A549 (cell line): ENCODE measurements at regions of chr1 and their contacts with region 1.

Region 1: DNA sequence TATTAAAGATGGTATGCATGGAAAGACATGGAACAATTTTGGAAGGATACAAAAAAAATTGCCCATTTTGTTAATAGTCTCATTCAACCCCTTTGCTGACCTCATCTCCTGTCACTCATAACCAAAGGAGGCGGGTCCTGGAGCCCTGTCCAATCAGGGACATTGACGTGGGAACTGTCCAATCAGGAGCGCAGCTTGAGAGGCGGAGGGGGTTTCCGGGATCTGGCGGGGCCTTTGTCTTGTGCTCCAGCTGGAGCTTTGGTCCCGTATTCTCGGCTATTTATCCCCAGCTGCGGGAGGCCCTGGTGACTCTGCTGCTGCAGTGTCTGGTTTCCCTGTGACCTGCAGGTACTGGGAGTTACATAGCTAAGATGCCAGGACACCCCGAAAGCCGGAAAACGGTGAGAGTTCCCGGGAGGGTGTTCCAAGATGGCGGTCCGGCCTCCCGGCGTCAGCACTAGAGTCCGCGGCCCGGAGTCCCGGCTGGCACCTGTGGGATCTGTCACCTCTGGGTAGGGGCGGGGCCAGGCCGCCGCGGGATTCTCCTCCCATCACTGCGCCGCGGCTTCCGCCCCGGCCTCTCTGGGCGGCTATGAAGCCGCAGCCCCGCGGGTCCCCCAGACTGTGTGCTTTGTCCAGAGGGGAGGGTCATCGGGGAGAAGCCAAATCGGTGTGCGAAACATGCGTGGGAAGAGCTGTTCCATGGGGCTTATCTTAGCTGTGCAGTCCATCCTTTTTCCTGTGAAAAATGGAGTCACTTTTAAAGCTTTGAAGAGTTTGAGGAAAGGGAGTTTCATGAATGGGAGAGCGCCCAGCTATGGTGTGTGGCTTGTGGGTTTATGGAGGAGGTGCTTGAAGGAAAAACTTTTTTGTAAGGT is at the start of gene ZNF678:
- DNase-seq: peak; percentile 97 to 99
- ATAC-seq: peak; percentile 98
- H3K4me3 ChIP-seq: peak within 1 kb of the TSS; percentile 61
- H3K27ac ChIP-seq: peak within 1 kb of the TSS; percentile 93
- H3K4me1 ChIP-seq: no peaks in the 10 kb centered on the region
- CTCF ChIP-seq: no peak
- EP300 ChIP-seq: no peak
- POLR2A ChIP-seq: peak; percentile 78
- RAD21 ChIP-seq: no peak
- polyA plus RNA-seq, gene ZNF678: 6.5 and 6.9 TPM in 2 replicates

Region 2: DNA sequence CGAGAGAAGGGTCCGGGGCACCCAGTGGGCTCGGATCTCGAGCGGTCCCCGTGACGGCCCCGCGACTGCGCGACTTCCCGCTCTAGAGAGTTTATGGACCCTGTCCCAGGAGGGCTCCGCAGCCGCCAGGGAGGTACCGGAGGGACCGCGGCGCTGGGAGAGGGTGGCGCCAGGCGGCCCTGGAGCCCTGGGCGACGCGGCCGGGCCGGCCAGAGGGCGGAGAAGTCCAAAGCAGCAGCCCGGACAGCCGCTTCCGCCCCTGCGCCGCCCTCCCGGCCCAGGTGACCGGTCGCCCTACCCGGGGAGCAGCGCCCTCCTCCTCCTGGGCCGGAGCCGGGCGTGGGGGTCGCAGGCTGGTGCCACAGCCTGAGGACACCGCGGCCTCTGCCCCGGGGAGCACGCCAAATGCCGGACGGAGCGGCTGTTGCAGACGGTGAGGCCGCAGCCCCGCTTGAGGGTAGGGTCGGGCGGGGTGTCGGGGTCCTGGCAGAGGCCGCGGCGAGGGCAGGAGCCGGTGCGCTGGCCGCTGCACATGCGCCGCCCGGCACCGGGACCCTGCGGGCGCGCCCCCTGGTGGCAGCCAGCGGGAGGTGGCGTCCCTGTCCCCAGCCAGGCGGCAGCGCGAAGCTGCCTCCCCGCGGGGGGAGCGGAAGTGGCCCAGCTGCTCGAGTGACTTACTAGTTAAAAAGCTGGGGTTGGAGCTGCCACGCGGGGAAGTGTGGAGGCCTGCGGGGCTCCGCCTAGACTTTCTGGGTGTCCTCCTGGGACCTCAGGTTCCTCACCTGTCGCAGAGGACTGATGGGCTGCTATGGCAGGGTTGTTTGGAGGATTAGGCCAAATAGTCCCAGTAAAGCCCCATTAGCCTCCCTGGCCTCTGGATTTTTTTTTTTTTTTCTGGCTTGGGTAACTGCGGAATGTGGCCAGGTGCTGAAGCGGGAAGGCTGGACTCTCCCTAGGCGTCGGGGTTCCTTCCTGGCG is 21.1 kb before region 1 on chr1:
- CTCF ChIA-PET with region 1: interaction called, 14 read pairs
- POLR2A ChIA-PET with region 1: interaction called, 6 read pairs
- DNase-seq: peak; percentile 73 to 86
- ATAC-seq: peak; percentile 96 to 97
- H3K4me3 ChIP-seq: peak overlapping the region; percentile 81
- H3K27ac ChIP-seq: peak overlapping the region; percentile 95 to 98
- H3K4me1 ChIP-seq: 0 out of 3 replicates have a peak, but pooled peaks cover 6% of the 10 kb centered on the region
- CTCF ChIP-seq: peak; percentile 95
- EP300 ChIP-seq: no peak
- POLR2A ChIP-seq: peak; percentile 50
- RAD21 ChIP-seq: peak; percentile 24 to 58; a peak in 3 of 5 replicates